Panc1 (cell line): ENCODE measurements at regions of chr9 and their contacts with region 1.

Region 1: DNA sequence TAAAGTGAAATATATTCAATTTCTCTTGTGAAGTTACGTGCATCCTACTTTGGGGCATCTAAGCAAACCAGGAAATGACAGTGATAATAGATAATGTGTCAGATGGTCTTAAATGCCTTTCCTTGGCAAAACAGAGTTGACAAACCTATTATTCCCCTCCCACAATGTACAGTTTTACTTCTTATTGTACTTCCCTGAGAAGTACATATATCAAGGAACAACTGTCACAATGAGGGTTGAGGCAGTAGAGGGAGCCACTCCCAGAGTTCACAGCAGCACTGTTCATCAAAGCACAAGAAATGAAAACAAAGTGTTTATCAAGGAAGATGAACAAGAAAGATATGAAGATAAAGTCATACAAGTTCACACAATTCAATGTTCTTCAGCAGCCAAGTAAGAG is 41.1 kb downstream of the ELAVL2 start:
- DNase-seq: no peak
- ATAC-seq: no peak
- H3K4me3 ChIP-seq: no peak overlapping the region
- H3K27ac ChIP-seq: no peak overlapping the region
- H3K4me1 ChIP-seq: no peaks in the 10 kb centered on the region
- H3K27me3 ChIP-seq: no peaks in the 10 kb centered on the region
- CTCF ChIP-seq: no peak

Region 2: DNA sequence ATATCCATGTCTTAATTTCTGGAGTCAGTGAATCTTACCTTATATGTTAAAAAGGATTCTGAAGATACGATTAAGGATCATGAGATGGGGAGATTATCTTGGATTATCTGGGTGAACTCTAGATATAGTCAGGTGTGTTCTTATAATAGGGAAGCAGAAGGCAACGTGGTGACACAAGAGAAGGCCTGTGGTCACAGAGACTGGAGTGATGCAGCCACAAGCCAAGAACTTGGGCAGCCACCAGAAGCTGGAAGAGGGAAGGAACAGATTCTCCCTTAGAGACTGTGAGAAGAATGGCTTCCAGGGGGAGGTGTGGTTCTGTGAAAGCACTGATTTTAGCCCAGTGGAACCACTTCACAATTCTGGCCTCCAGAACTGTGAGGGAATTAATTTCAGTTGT is 136.3 kb before region 1 on chr9:
- CTCF ChIA-PET with region 1: no interaction called
- POLR2A ChIA-PET with region 1: no interaction called
- in situ Hi-C with region 1: no loop called
- intact Hi-C with region 1: no loop called
- DNase-seq: no peak
- ATAC-seq: no peak
- H3K4me3 ChIP-seq: no peak overlapping the region
- H3K27ac ChIP-seq: no peak overlapping the region
- H3K4me1 ChIP-seq: no peaks in the 10 kb centered on the region
- H3K27me3 ChIP-seq: no peaks in the 10 kb centered on the region
- CTCF ChIP-seq: no peak

Region 3: DNA sequence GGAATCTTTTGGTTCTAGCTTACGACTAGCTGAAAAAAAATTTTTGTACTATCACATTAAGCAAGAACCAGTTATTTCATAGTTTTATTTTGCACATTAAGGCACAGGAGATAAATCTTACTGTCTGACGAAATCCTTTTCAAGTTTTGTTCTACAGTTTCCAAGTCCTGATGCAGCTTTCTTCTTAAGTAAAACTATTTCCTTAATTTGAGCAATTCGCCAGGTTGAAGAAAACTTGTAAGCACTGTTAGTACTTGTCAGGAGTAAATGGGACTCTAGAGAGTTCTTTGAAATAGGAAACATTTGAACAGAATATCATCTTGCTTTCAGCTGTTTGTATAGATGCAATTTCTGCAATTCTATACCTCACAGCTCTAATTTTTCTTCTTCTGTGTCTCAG is 359.8 kb after region 1 on chr9:
- CTCF ChIA-PET with region 1: no interaction called
- POLR2A ChIA-PET with region 1: interaction called, 10 read pairs
- in situ Hi-C with region 1: no loop called
- intact Hi-C with region 1: no loop called
- DNase-seq: no peak
- ATAC-seq: no peak
- H3K4me3 ChIP-seq: no peak overlapping the region
- H3K27ac ChIP-seq: no peak overlapping the region
- H3K4me1 ChIP-seq: no peaks in the 10 kb centered on the region
- H3K27me3 ChIP-seq: no peaks in the 10 kb centered on the region
- CTCF ChIP-seq: no peak